ENCODE measurements at regions of chr16 and their contacts with region 1.

Region 1: DNA sequence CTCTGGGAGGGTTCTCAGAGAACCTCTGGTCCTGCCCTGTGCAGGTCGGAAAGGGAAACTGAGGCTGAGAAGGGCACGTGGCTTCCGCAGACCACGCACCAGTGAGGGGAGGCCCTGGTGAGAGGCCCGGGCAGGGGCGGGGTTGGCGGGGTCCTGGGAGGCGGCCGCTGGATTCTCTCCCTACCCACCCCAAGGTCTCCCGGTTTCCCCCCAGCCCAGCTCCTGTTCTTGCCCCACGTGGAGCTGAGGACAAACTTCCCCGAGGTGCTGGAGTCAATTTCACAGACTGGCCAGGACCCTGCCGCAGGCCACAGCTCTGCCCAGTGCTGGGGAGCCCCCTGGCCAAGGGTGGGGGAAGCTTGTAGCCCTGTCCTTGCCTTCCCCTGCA is 11.5 kb downstream of the CCL17 start:
- DNase-seq: no peak
- H3K4me3 ChIP-seq: peak overlapping the region in 2 of 4 experiments; percentile 19 to 57; a peak in 5 of 8 replicates
- H3K27ac ChIP-seq: no peak overlapping the region
- H3K4me1 ChIP-seq: peaks cover 0 to 12% (median 7%) of the 10 kb centered on the region in 4 experiments; a peak in 6 of 7 replicates
- H3K27me3 ChIP-seq: no peaks in the 10 kb centered on the region
- CTCF ChIP-seq: no peak
- EP300 ChIP-seq: no peak
- POLR2A ChIP-seq: no peak
- RAD21 ChIP-seq: no peak

Region 2: DNA sequence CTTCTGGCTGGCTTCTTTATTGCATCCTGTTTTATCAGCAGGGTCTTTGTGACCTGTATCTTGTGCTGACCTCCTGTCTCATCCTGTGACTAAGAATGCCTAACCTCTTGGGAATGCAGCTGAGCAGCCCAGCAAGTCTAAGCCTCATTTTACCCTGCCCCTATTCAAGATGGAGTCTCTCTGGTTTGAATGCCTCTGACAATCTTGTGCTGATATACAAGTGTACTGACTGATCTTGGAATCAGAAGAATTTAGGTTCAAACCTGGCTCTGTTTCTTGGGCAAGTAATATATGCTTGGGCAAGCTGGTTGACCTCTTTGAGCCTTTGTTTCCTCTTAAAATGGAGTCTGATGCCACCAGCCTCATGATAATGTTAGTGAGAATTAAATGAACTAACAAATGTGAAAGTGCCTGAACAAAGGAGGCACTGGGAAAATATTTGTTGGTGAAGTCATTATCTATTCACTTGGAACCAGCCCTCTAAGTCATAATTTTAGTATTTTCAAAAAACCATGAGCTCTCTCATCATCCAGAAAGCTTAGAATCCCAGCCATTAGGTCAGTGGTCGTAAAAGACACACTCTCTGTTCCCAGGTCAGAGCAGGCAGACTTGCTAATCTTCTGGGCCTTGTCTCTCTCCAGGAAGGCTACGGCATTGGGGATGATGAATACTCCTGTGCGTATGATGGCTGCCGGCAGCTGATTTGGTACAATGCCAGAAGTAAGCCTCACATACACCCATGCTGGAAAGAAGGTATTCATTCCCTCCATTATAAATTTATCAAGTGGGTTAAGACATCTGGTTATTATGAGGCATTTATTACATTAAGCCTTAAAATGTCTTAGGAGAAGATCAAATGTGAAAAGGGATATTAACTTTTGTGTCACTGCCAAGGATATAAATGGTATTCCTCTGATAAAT is 189.2 kb before region 1 on chr16:
- CTCF ChIA-PET with region 1: no interaction called
- POLR2A ChIA-PET with region 1: no interaction called
- DNase-seq: no peak
- H3K4me3 ChIP-seq: no peak overlapping the region
- H3K27ac ChIP-seq: no peak overlapping the region
- H3K4me1 ChIP-seq: no peaks in the 10 kb centered on the region
- H3K27me3 ChIP-seq: no peaks in the 10 kb centered on the region
- CTCF ChIP-seq: no peak
- EP300 ChIP-seq: no peak
- POLR2A ChIP-seq: no peak
- RAD21 ChIP-seq: no peak

Region 3: DNA sequence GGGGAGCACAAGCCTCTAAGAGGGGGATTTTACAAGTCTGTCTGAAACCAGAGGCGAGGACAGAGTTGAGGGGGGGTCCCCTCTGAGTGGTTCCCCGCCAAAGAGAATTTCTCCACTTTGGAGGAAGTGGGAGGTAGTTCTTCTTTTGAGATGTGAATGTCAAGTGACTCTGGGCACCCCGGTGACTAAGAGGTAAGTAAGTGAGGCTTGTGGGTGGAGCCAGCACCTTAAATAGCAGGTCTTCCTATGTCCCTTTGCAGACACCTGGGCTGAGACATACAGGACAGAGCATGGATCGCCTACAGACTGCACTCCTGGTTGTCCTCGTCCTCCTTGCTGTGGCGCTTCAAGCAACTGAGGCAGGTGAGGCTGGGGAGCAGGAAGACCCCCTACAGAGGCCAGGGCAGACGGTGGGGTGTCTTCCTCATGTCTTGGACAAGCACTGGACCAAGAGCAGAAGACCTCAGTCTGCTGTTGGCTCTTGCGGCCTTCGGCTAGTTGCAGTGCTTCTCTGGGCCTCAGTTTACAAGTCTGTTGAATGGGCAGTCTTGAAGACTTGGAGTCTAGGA is 57.5 kb before region 1 on chr16 and contains the start of gene CCL22:
- CTCF ChIA-PET with region 1: interaction called, 14 read pairs
- POLR2A ChIA-PET with region 1: no interaction called
- DNase-seq: no peak
- H3K4me3 ChIP-seq: no peak within 1 kb of the TSS
- H3K27ac ChIP-seq: no peak within 1 kb of the TSS
- H3K4me1 ChIP-seq: peaks cover 0 to 2% (median 0%) of the 10 kb centered on the region in 4 experiments; a peak in 2 of 7 replicates
- H3K27me3 ChIP-seq: peaks cover 0 to under 1% (median 0%) of the 10 kb centered on the region in 4 experiments; a peak in 1 of 7 replicates
- CTCF ChIP-seq: no peak
- EP300 ChIP-seq: no peak
- POLR2A ChIP-seq: no peak
- RAD21 ChIP-seq: no peak
- total RNA-seq, gene CCL22: not detected in 2 replicates

Region 4: DNA sequence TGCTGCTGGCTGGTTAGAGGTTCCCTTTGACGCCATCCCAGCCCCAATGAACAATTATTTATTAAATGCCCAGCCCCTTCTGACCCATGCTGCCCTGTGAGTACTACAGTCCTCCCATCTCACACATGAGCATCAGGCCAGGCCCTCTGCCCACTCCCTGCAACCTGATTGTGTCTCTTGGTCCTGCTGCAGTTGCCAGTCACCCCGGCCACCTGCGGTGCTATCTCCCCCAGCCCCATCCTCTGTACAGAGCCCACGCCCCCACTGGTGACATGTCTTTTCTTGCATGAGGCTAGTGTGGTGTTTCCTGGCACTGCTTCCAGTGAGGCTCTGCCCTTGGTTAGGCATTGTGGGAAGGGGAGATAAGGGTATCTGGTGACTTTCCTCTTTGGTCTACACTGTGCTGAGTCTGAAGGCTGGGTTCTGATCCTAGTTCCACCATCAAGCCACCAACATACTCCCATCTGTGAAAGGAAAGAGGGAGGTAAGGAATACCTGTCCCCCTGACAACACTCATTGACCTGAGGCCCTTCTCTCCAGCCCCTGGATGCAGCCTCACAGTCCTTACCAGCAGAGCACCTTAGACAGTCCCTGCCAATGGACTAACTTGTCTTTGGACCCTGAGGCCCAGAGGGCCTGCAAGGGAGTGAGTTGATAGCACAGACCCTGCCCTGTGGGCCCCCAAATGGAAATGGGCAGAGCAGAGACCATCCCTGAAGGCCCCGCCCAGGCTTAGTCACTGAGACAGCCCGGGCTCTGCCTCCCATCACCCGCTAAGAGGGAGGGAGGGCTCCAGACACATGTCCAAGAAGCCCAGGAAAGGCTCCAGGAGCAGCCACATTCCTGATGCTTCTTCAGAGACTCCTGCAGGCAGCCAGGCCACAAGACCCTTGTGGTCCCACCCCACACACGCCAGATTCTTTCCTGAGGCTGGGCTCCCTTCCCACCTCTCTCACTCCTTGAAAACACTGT is 32.6 kb before region 1 on chr16:
- CTCF ChIA-PET with region 1: interaction called, 32 read pairs
- POLR2A ChIA-PET with region 1: interaction called, 3 read pairs
- DNase-seq: no peak
- H3K4me3 ChIP-seq: no peak overlapping the region
- H3K27ac ChIP-seq: no peak overlapping the region
- H3K4me1 ChIP-seq: peaks cover 0 to 2% (median 1%) of the 10 kb centered on the region in 4 experiments; a peak in 1 of 7 replicates
- H3K27me3 ChIP-seq: no peaks in the 10 kb centered on the region
- CTCF ChIP-seq: no peak
- EP300 ChIP-seq: no peak
- POLR2A ChIP-seq: no peak
- RAD21 ChIP-seq: no peak

Region 5: DNA sequence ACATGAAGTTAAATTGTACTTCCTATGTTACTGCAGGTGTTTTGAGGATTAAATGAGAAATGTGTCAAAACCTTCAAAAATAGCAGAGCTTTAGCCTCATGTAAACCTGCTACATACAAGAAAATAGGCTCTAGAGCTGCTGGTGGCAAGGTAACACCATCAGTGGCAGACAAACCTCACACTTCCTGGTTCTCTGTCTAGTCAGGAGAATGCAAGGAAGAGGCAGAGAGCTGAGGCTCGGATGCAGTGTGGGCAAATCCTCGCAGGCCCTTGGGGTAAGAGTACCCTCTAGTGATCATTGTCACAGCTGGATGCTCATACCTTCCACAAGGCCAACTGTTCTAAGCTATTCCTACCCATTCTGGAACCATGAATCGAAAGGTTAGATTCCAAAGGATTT is 16.9 kb after region 1 on chr16:
- CTCF ChIA-PET with region 1: interaction called, 34 read pairs
- POLR2A ChIA-PET with region 1: no interaction called
- DNase-seq: no peak
- H3K4me3 ChIP-seq: no peak overlapping the region
- H3K27ac ChIP-seq: no peak overlapping the region
- H3K4me1 ChIP-seq: no peaks in the 10 kb centered on the region
- H3K27me3 ChIP-seq: no peaks in the 10 kb centered on the region
- CTCF ChIP-seq: no peak
- EP300 ChIP-seq: no peak
- POLR2A ChIP-seq: no peak
- RAD21 ChIP-seq: no peak

Region 6: GRCh38 chr16:57485916-57486857 is 70.1 kb after region 1 on chr16 and contains the start of gene DOK4:
- CTCF ChIA-PET with region 1: interaction called, 18 read pairs
- POLR2A ChIA-PET with region 1: no interaction called
- DNase-seq: peak in 1 of 2 experiments; percentile 91
- H3K4me3 ChIP-seq: peak within 1 kb of the TSS; percentile 53 to 79 (median 72)
- H3K27ac ChIP-seq: no peak within 1 kb of the TSS
- H3K4me1 ChIP-seq: peaks cover 0 to 14% (median 10%) of the 10 kb centered on the region in 4 experiments; a peak in 6 of 7 replicates
- H3K27me3 ChIP-seq: peaks cover 0 to 12% (median 4%) of the 10 kb centered on the region in 4 experiments; a peak in 4 of 7 replicates
- CTCF ChIP-seq: no peak
- EP300 ChIP-seq: no peak
- POLR2A ChIP-seq: no peak
- RAD21 ChIP-seq: no peak
- total RNA-seq, gene DOK4: 28.9 and 29.9 TPM in 2 replicates

Region 7: GRCh38 chr16:57540906-57541753 is 125.0 kb after region 1 on chr16:
- CTCF ChIA-PET with region 1: no interaction called
- POLR2A ChIA-PET with region 1: no interaction called
- DNase-seq: peak in 1 of 2 experiments; percentile 39
- H3K4me3 ChIP-seq: no peak overlapping the region
- H3K27ac ChIP-seq: no peak overlapping the region
- H3K4me1 ChIP-seq: peaks cover 5 to 17% (median 6%) of the 10 kb centered on the region in 4 experiments
- H3K27me3 ChIP-seq: peaks cover 0 to 5% (median 2%) of the 10 kb centered on the region in 4 experiments; a peak in 3 of 7 replicates
- CTCF ChIP-seq: no peak
- EP300 ChIP-seq: no peak
- POLR2A ChIP-seq: no peak
- RAD21 ChIP-seq: no peak

Region 8: DNA sequence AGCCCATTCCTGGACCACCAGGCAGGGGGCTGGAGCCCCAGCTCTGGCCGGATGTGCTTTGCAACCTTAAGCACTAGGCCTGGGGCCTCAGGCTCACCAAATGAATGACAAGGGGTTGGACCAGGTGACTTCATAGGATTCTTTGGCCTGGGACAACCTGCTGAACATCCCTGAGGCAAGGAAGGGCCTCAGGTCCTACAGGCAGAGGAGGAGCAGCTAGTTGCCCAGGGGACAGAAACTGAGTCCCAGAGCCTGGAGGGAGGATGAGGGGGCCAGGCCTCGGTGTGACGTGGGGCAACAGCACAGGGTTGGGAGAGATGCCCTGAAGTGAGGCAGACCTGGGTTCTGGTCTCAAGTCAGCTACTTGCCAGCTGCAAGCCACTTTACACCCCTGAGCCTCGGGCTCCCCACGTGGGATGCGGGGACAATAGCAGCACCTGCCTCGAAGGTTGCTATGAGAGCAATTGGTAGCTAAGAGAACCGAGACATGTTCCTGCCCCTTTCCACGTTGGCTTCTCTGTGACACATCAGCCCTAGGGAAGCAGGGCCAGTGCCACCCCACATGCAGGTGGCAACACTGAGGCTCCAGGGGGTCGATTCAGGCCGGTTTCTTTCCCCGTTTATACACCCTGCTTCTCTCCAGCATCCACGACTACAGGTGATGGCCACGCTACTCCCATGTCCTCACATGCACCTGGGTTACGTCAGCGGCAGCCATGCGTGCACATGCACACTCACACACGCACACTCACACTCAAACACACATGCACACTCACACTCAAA is 670.5 kb after region 1 on chr16:
- CTCF ChIA-PET with region 1: no interaction called
- POLR2A ChIA-PET with region 1: no interaction called
- DNase-seq: no peak
- H3K4me3 ChIP-seq: no peak overlapping the region
- H3K27ac ChIP-seq: no peak overlapping the region
- H3K4me1 ChIP-seq: peaks cover 0 to 10% (median 4%) of the 10 kb centered on the region in 4 experiments; a peak in 3 of 7 replicates
- H3K27me3 ChIP-seq: no peaks in the 10 kb centered on the region
- CTCF ChIP-seq: no peak
- EP300 ChIP-seq: no peak
- POLR2A ChIP-seq: no peak
- RAD21 ChIP-seq: no peak